Activated CD4-positive, alpha-beta T cell treated with anti-CD3 and anti-CD28 coated beads, Interleukin-2, amount 10 ng/mL, durations not matched to agents 24 days and 14 days (primary cell): ENCODE measurements at regions of chr5 and their contacts with region 1.

Region 1: GRCh38 chr5:57298295-57298984 is 124.6 kb downstream of the GPBP1 start:
- DNase-seq: peak; percentile 96
- H3K4me3 Mint-ChIP-seq: peak overlapping the region; percentile 76
- H3K27ac Mint-ChIP-seq: peak overlapping the region; percentile 55
- H3K4me1 Mint-ChIP-seq: peaks cover 18% of the 10 kb centered on the region
- H3K27me3 Mint-ChIP-seq: peaks cover 2% of the 10 kb centered on the region

Region 2: GRCh38 chr5:57243286-57244137 is 54.9 kb before region 1 on chr5:
- intact Hi-C with region 1: no loop called
- DNase-seq: no peak
- H3K4me3 Mint-ChIP-seq: no peak overlapping the region
- H3K27ac Mint-ChIP-seq: peak overlapping the region; percentile 66
- H3K4me1 Mint-ChIP-seq: peaks cover 21% of the 10 kb centered on the region
- H3K27me3 Mint-ChIP-seq: no peaks in the 10 kb centered on the region

Region 3: GRCh38 chr5:57259704-57260103 is 38.7 kb before region 1 on chr5:
- intact Hi-C with region 1: no loop called
- DNase-seq: no peak
- H3K4me3 Mint-ChIP-seq: no peak overlapping the region
- H3K27ac Mint-ChIP-seq: peak overlapping the region; percentile 80
- H3K4me1 Mint-ChIP-seq: peaks cover 24% of the 10 kb centered on the region
- H3K27me3 Mint-ChIP-seq: no peaks in the 10 kb centered on the region

Region 4: GRCh38 chr5:57311921-57312735 is 13.7 kb after region 1 on chr5:
- intact Hi-C with region 1: no loop called
- DNase-seq: no peak
- H3K4me3 Mint-ChIP-seq: no peak overlapping the region
- H3K27ac Mint-ChIP-seq: no peak overlapping the region
- H3K4me1 Mint-ChIP-seq: peaks cover 3% of the 10 kb centered on the region
- H3K27me3 Mint-ChIP-seq: no peaks in the 10 kb centered on the region

Region 5: GRCh38 chr5:57324181-57324580 is 25.7 kb after region 1 on chr5:
- intact Hi-C with region 1: loop called (anchors 1 kb)
- DNase-seq: no peak
- H3K4me3 Mint-ChIP-seq: no peak overlapping the region
- H3K27ac Mint-ChIP-seq: peak overlapping the region; percentile 82
- H3K4me1 Mint-ChIP-seq: peaks cover 10% of the 10 kb centered on the region
- H3K27me3 Mint-ChIP-seq: no peaks in the 10 kb centered on the region

Region 6: GRCh38 chr5:57383093-57383861 is 84.8 kb after region 1 on chr5:
- intact Hi-C with region 1: loop called (anchors 1 kb)
- DNase-seq: peak; percentile 80
- H3K4me3 Mint-ChIP-seq: peak overlapping the region; percentile 25
- H3K27ac Mint-ChIP-seq: peak overlapping the region; percentile 76
- H3K4me1 Mint-ChIP-seq: peaks cover 9% of the 10 kb centered on the region
- H3K27me3 Mint-ChIP-seq: no peaks in the 10 kb centered on the region

Region 7: DNA sequence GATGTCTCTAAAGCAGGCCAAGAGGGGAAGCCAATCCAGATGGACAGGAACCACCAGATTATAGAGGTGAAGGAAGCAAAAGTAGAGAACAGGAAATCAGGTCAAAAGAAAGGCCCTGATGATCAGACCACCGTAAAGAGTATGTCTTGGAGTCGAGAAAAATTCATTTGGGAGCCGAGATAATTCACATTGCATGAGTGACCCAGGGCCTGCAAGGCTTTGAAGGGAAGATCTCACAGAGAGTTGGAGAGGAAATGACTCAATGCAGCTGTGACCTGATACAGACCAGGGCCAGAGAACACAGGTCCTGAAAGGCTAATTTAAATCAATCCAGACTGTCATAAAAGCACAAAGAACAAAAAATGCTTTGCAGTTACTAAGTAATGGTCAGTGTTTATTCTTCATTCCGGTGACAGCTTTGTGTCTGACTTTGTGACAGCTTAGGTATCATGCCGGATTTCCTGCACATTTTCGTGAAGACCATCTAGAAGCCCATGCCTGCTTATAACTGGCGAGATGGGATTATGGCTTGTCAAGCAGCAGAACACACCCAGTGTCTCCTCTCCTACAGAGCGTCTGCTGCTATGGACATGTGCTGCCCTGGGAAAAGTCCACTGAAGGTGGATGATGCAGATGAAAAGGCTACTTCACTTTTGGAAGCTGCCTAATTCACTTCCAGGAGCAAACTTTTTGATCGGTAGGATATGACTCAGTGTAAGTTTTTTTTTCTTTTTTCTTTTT is 189.9 kb after region 1 on chr5:
- intact Hi-C with region 1: no loop called
- DNase-seq: no peak
- H3K4me3 Mint-ChIP-seq: no peak overlapping the region
- H3K27ac Mint-ChIP-seq: no peak overlapping the region
- H3K4me1 Mint-ChIP-seq: peaks cover 7% of the 10 kb centered on the region
- H3K27me3 Mint-ChIP-seq: peaks cover 5% of the 10 kb centered on the region

Region 8: GRCh38 chr5:57499262-57500050 is 201.0 kb after region 1 on chr5:
- intact Hi-C with region 1: loop called (anchors 1 kb)
- DNase-seq: peak; percentile 74
- H3K4me3 Mint-ChIP-seq: peak overlapping the region; percentile 73
- H3K27ac Mint-ChIP-seq: peak overlapping the region; percentile 59
- H3K4me1 Mint-ChIP-seq: peaks cover 34% of the 10 kb centered on the region
- H3K27me3 Mint-ChIP-seq: peaks cover 5% of the 10 kb centered on the region

Region 9: GRCh38 chr5:57650360-57651069 is 352.1 kb after region 1 on chr5:
- intact Hi-C with region 1: loop called (anchors 5 kb)
- DNase-seq: peak; percentile 70
- H3K4me3 Mint-ChIP-seq: no peak overlapping the region
- H3K27ac Mint-ChIP-seq: no peak overlapping the region
- H3K4me1 Mint-ChIP-seq: no peaks in the 10 kb centered on the region
- H3K27me3 Mint-ChIP-seq: peaks cover 16% of the 10 kb centered on the region

Region 10: GRCh38 chr5:57779383-57780223 is 481.2 kb after region 1 on chr5:
- intact Hi-C with region 1: loop called (anchors 2 kb)
- DNase-seq: peak; percentile 71
- H3K4me3 Mint-ChIP-seq: no peak overlapping the region
- H3K27ac Mint-ChIP-seq: no peak overlapping the region
- H3K4me1 Mint-ChIP-seq: no peaks in the 10 kb centered on the region
- H3K27me3 Mint-ChIP-seq: peaks cover 11% of the 10 kb centered on the region

Region 11: GRCh38 chr5:58849921-58850667 is 1551.7 kb after region 1 on chr5:
- intact Hi-C with region 1: loop called (anchors 2 kb)
- DNase-seq: no peak
- H3K4me3 Mint-ChIP-seq: no peak overlapping the region
- H3K27ac Mint-ChIP-seq: no peak overlapping the region
- H3K4me1 Mint-ChIP-seq: no peaks in the 10 kb centered on the region
- H3K27me3 Mint-ChIP-seq: peaks cover 11% of the 10 kb centered on the region